Activated CD4-positive, alpha-beta memory T cell treated with anti-CD3 and anti-CD28 coated beads, Interleukin-2, amount 10 ng/mL, durations not matched to agents 7 days and 5 days (primary cell): ENCODE measurements at regions of chr16 and their contacts with region 1.

Region 1: GRCh38 chr16:81469710-81470535 is 25.3 kb downstream of the CMIP start:
- DNase-seq: peak; percentile 61
- H3K4me3 Mint-ChIP-seq: peak overlapping the region; percentile 63
- H3K27ac Mint-ChIP-seq: peak overlapping the region; percentile 90
- H3K4me1 Mint-ChIP-seq: peaks cover 56% of the 10 kb centered on the region
- H3K27me3 Mint-ChIP-seq: no peaks in the 10 kb centered on the region

Region 2: DNA sequence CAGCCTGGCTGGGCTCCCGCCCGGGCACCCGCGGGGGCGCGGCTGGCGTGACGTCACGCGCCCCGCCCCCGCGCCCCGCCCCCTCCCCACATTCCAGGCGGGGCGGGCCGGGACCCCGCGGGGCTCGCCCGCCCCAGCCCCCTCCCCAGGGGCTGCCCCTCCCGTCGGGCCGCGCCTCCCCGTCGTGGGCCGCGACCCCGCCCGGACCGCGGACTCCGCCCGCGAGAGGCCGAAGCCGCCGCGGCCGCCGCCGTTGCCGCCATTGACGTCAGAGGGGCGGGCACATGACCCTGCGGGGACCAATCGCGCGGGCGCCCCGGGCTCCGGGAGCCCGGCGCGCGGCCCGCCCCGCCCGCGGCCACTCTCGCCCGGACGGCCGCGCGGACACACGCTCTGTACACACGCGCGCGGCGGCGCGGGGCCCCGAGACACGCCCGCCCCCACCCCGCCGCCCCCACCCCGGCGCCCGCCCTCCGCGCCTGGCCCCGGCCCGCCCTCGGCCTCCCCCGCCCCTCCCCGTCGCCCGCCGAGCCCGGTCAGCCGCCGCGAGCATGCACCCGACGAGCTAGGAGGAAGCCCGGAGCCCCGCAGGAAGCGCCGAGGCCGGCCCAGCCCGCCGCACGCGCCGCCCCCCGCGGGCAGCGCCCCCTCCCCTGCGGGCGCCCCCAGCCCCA is 25.3 kb before region 1 on chr16 and contains the start of gene CMIP:
- CTCF ChIA-PET with region 1: no interaction called
- POLR2A ChIA-PET with region 1: interaction called, 23 read pairs
- DNase-seq: peak; percentile 82
- H3K4me3 Mint-ChIP-seq: peak within 1 kb of the TSS; percentile 83
- H3K27ac Mint-ChIP-seq: peak within 1 kb of the TSS; percentile 80
- H3K4me1 Mint-ChIP-seq: peaks cover 41% of the 10 kb centered on the region
- H3K27me3 Mint-ChIP-seq: peaks cover 33% of the 10 kb centered on the region
- total RNA-seq, gene CMIP: 57.1 to 58.3 TPM

Region 3: DNA sequence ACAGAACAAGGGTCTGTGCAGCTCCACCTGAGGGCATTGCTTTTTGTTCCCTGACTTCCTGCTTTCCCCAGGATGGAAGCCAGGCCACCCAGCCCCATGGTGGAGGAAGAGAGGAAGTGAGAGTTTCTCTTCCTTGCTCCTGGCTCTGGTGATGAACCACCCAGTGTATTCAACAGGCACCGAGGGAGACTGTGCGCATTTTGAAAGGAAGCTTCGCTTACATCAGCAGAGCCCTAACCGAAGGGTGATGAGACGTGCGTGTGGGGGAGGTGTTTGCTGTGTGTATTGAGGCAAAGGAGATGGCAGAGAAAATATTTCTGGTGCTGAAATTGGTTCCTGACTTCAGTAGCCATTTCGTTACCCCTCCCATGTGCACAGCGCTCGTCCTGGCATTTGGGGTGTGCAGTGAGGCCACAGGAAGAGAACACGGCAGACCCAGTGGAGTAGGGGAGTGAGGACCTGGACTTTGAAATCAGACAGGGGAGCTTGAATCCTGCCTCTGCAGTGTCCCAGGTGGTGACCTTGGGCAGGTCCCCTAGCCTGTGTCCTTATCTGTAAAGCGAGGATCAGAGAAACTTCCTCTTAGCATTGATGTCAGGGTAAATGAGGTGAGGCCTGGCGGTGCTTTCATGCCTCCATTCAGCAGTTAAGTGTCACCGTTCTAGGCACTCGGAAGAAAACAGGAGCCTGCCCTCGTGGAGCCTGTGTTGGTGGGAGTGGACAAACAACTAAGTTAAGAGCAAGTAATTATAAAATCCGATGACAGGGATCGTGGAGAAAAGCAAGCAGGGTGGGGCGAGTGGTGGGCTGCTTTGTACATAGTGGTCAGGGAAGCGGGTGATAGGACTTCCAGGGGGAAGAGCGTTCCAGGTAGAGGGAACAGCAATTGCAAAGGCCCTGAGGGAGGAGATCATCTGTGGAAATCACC is 17.9 kb before region 1 on chr16:
- CTCF ChIA-PET with region 1: interaction called, 7 read pairs
- POLR2A ChIA-PET with region 1: interaction called, 12 read pairs
- DNase-seq: peak; percentile 36
- H3K4me3 Mint-ChIP-seq: peak overlapping the region; percentile 42
- H3K27ac Mint-ChIP-seq: peak overlapping the region; percentile 76
- H3K4me1 Mint-ChIP-seq: peaks cover 46% of the 10 kb centered on the region
- H3K27me3 Mint-ChIP-seq: no peaks in the 10 kb centered on the region

Region 4: GRCh38 chr16:81521151-81521626 is 51.3 kb after region 1 on chr16:
- CTCF ChIA-PET with region 1: interaction called, 4 read pairs
- POLR2A ChIA-PET with region 1: interaction called, 22 read pairs
- DNase-seq: peak; percentile 92
- H3K4me3 Mint-ChIP-seq: peak overlapping the region; percentile 44
- H3K27ac Mint-ChIP-seq: peak overlapping the region; percentile 92
- H3K4me1 Mint-ChIP-seq: peaks cover 70% of the 10 kb centered on the region
- H3K27me3 Mint-ChIP-seq: no peaks in the 10 kb centered on the region